Activated B cell treated with CpG ODN at 0.5 μM for 24 hours (primary cell): ENCODE measurements at regions of chr22 and their contacts with region 1.

Region 1: DNA sequence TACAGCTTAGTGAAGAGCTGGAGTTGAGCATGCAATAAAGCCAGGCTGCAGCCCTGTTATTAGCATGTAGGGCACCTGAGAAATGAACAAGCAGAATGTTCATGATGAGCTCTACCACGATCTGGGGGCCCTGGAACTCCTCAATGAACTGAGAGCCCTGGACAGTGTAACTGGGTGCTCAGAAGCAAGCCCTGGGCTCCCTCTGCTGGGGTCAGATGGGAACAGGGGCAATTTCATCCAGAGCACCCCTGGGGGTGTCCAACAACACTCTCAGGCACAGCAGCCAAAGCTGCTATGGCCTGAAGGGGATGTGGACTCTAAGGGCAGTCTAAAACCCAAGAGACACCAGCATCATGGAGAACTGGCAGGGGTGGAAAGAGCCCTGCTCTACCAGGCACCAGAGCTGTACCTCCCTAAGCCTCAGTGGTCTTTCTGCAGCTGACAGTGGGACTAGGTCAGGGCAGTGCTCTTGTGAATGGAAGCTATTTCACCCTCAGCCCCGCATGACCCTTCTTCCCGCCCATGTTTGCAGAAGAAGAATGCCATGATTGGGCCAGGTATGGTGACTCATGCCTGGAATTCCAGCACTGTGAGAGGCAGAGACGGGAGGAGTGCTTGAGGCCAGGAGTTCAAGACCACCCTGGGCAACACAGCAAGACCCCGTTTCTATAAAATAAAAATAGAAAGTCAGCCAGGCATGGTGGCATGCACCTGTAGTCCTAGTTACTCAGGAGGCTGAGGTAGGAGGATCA is 28.9 kb downstream of the THOC5 start:
- DNase-seq: peak; percentile 33
- ATAC-seq: peak; percentile 94
- H3K4me3 Mint-ChIP-seq: no peak overlapping the region
- H3K27ac Mint-ChIP-seq: no peak overlapping the region
- H3K4me1 Mint-ChIP-seq: no peaks in the 10 kb centered on the region
- H3K27me3 Mint-ChIP-seq: no peaks in the 10 kb centered on the region
- CTCF ChIP-seq: no peak

Region 2: GRCh38 chr22:29306175-29306834 is 218.3 kb before region 1 on chr22 and contains the start of gene GAS2L1:
- CTCF ChIA-PET with region 1: no interaction called
- POLR2A ChIA-PET with region 1: no interaction called
- intact Hi-C with region 1: loop called (anchors 1 kb)
- DNase-seq: no peak
- ATAC-seq: peak; percentile 62
- H3K4me3 Mint-ChIP-seq: peak within 1 kb of the TSS; percentile 75
- H3K27ac Mint-ChIP-seq: no peak within 1 kb of the TSS
- H3K4me1 Mint-ChIP-seq: peaks cover 24% of the 10 kb centered on the region
- H3K27me3 Mint-ChIP-seq: peaks cover 16% of the 10 kb centered on the region
- CTCF ChIP-seq: no peak
- total RNA-seq, gene GAS2L1: not detected in 2 replicates

Region 3: DNA sequence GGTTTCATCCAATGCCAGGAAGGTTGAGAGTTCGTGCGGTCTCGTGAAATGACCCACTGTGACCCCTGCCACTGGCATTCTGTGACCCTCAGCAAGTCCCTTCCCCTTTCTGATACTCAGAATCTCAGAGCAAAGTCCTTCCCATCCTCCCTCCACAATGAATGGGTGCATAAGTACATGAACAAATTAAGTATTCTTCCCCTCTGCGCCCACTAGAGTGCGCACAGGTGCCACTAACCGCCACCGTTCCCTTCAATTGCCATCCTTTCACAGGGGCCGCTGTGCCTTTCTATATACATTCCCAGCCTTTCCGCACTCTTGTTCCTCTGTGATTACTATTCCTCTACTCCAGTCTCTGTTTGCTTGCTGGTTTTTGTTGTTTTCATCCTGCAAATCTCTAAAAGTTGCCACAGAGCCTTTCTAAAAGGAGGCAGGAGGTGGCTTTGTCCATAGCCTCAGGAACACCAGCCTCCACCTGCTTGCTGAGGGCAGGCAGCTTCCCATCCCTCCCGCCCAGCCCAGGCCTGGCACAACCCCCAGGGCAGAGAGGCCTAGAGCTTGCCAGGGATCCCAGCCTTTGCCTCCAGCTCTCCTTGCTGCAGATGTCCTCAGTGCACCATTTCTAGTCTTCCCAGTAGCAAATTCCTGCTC is 129.6 kb before region 1 on chr22:
- CTCF ChIA-PET with region 1: interaction called, 48 read pairs
- POLR2A ChIA-PET with region 1: no interaction called
- intact Hi-C with region 1: loop called (anchors 1 kb)
- DNase-seq: peak; percentile 54
- ATAC-seq: peak; percentile 87
- H3K4me3 Mint-ChIP-seq: no peak overlapping the region
- H3K27ac Mint-ChIP-seq: no peak overlapping the region
- H3K4me1 Mint-ChIP-seq: peaks cover 17% of the 10 kb centered on the region
- H3K27me3 Mint-ChIP-seq: peaks cover 2% of the 10 kb centered on the region
- CTCF ChIP-seq: peak; percentile 78

Region 4: GRCh38 chr22:29470159-29470855 is 54.3 kb before region 1 on chr22:
- CTCF ChIA-PET with region 1: interaction called, 3 read pairs
- POLR2A ChIA-PET with region 1: no interaction called
- intact Hi-C with region 1: loop called (anchors 1 kb)
- DNase-seq: peak; percentile 54
- ATAC-seq: peak; percentile 69
- H3K4me3 Mint-ChIP-seq: peak overlapping the region; percentile 56
- H3K27ac Mint-ChIP-seq: no peak overlapping the region
- H3K4me1 Mint-ChIP-seq: peaks cover 14% of the 10 kb centered on the region
- H3K27me3 Mint-ChIP-seq: peaks cover 20% of the 10 kb centered on the region
- CTCF ChIP-seq: peak; percentile 36

Region 5: GRCh38 chr22:29541845-29542244 is 17.2 kb after region 1 on chr22:
- CTCF ChIA-PET with region 1: no interaction called
- POLR2A ChIA-PET with region 1: interaction called, 13 read pairs
- intact Hi-C with region 1: no loop called
- DNase-seq: no peak
- ATAC-seq: peak; percentile 28
- H3K4me3 Mint-ChIP-seq: no peak overlapping the region
- H3K27ac Mint-ChIP-seq: no peak overlapping the region
- H3K4me1 Mint-ChIP-seq: peaks cover 10% of the 10 kb centered on the region
- H3K27me3 Mint-ChIP-seq: no peaks in the 10 kb centered on the region
- CTCF ChIP-seq: no peak

Region 6: GRCh38 chr22:29647954-29648737 is 123.5 kb after region 1 on chr22:
- CTCF ChIA-PET with region 1: no interaction called
- POLR2A ChIA-PET with region 1: no interaction called
- intact Hi-C with region 1: no loop called
- DNase-seq: no peak
- ATAC-seq: no peak
- H3K4me3 Mint-ChIP-seq: no peak overlapping the region
- H3K27ac Mint-ChIP-seq: no peak overlapping the region
- H3K4me1 Mint-ChIP-seq: no peaks in the 10 kb centered on the region
- H3K27me3 Mint-ChIP-seq: no peaks in the 10 kb centered on the region
- CTCF ChIP-seq: no peak